CD4-positive, alpha-beta T cell (primary cell): ENCODE measurements at regions of chr19 and their contacts with region 1.

Region 1: GRCh38 chr19:57632987-57633831 is at the start of gene ZNF211:
- DNase-seq: peak; percentile 73 to 95 (median 84)
- ATAC-seq: peak; percentile 99
- H3K4me3 ChIP-seq: peak within 1 kb of the TSS; percentile 87
- H3K4me3 Mint-ChIP-seq: peak within 1 kb of the TSS; percentile 98
- H3K27ac ChIP-seq: peak within 1 kb of the TSS; percentile 69 to 72
- H3K27ac Mint-ChIP-seq: peak within 1 kb of the TSS; percentile 76
- H3K4me1 ChIP-seq: peaks cover 19% of the 10 kb centered on the region
- H3K4me1 Mint-ChIP-seq: peaks cover 31% of the 10 kb centered on the region
- H3K27me3 ChIP-seq: no peaks in the 10 kb centered on the region
- H3K27me3 Mint-ChIP-seq: no peaks in the 10 kb centered on the region
- CTCF ChIP-seq: no peak
- total RNA-seq, gene ZNF211: 29.3 to 30.5 TPM

Region 2: DNA sequence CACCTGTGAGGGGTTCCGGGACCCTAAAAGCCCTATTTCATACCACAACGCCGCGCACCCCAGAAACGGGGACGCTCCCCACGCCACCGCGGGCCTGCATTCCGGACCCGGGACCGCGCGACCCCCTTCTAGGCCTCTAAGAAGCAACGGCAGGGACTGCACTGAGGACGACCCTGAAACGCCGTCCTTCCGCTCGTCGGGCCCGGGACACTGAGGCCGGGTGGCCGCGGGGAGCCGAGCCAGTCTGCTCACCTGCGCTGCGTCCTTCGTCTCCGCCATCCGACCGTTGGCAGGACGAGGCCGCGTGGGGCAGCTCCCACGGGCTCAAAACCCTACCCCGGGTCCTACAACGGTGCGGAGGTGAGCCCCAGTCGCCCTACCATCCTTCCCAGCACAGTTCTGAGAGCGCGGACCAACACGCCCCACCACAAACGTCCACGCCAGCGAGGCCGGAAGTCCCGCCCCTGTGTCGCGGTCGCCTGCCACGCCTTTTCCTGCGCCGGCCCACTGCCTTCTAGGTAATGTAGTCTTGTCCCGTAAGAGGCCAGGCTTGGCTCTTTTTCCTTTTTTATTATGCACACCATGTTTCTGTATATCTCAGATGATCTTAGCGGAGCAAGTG is 73.7 kb before region 1 on chr19 and contains the start of gene ZNF550:
- CTCF ChIA-PET with region 1: no interaction called
- POLR2A ChIA-PET with region 1: no interaction called
- intact Hi-C with region 1: loop called in 1 of 2 experiments (anchors 5 kb)
- DNase-seq: peak; percentile 77 to 93 (median 86)
- ATAC-seq: peak; percentile 98
- H3K4me3 ChIP-seq: peak within 1 kb of the TSS; percentile 94
- H3K4me3 Mint-ChIP-seq: peak within 1 kb of the TSS; percentile 95
- H3K27ac ChIP-seq: peak within 1 kb of the TSS; percentile 44 to 45
- H3K27ac Mint-ChIP-seq: peak within 1 kb of the TSS; percentile 64
- H3K4me1 ChIP-seq: peaks cover 25% of the 10 kb centered on the region
- H3K4me1 Mint-ChIP-seq: peaks cover 34% of the 10 kb centered on the region
- H3K27me3 ChIP-seq: peaks cover 0 to 5% of the 10 kb centered on the region in 2 experiments
- H3K27me3 Mint-ChIP-seq: peaks cover 9% of the 10 kb centered on the region
- CTCF ChIP-seq: no peak
- total RNA-seq, gene ZNF550: 15.7 to 20.0 TPM

Region 3: GRCh38 chr19:57613941-57614743 is 19.1 kb before region 1 on chr19 and contains the start of gene ZNF134:
- CTCF ChIA-PET with region 1: no interaction called
- POLR2A ChIA-PET with region 1: interaction called, 13 read pairs
- intact Hi-C with region 1: loop called (anchors 1 kb)
- DNase-seq: peak; percentile 82 to 96 (median 88)
- ATAC-seq: peak; percentile 99
- H3K4me3 ChIP-seq: peak within 1 kb of the TSS; percentile 94
- H3K4me3 Mint-ChIP-seq: peak within 1 kb of the TSS; percentile 95
- H3K27ac ChIP-seq: peak within 1 kb of the TSS; percentile 26 to 50
- H3K27ac Mint-ChIP-seq: peak within 1 kb of the TSS; percentile 82
- H3K4me1 ChIP-seq: peaks cover 26% of the 10 kb centered on the region
- H3K4me1 Mint-ChIP-seq: peaks cover 36% of the 10 kb centered on the region
- H3K27me3 ChIP-seq: no peaks in the 10 kb centered on the region
- H3K27me3 Mint-ChIP-seq: no peaks in the 10 kb centered on the region
- CTCF ChIP-seq: peak; percentile 25
- total RNA-seq, gene ZNF134: 24.6 to 25.7 TPM

Region 4: GRCh38 chr19:57682226-57682766 is 49.1 kb after region 1 on chr19:
- CTCF ChIA-PET with region 1: interaction called, 8 read pairs
- POLR2A ChIA-PET with region 1: interaction called, 4 read pairs
- intact Hi-C with region 1: loop called in 1 of 2 experiments (anchors 5 kb)
- DNase-seq: no peak
- ATAC-seq: no peak
- H3K4me3 ChIP-seq: peak overlapping the region; percentile 81
- H3K4me3 Mint-ChIP-seq: peak overlapping the region; percentile 98
- H3K27ac ChIP-seq: peak overlapping the region; percentile 29 to 55
- H3K27ac Mint-ChIP-seq: peak overlapping the region; percentile 93
- H3K4me1 ChIP-seq: peaks cover 26% of the 10 kb centered on the region
- H3K4me1 Mint-ChIP-seq: peaks cover 43% of the 10 kb centered on the region
- H3K27me3 ChIP-seq: peaks cover 4 to 8% of the 10 kb centered on the region in 2 experiments
- H3K27me3 Mint-ChIP-seq: peaks cover 14% of the 10 kb centered on the region
- CTCF ChIP-seq: no peak

Region 5: GRCh38 chr19:57708641-57709361 is 75.6 kb after region 1 on chr19 and contains the start of gene ZNF154:
- CTCF ChIA-PET with region 1: no interaction called
- POLR2A ChIA-PET with region 1: interaction called, 10 read pairs
- intact Hi-C with region 1: no loop called
- DNase-seq: peak in 12 of 14 experiments; percentile 10 to 80 (median 34)
- ATAC-seq: peak; percentile 90
- H3K4me3 ChIP-seq: peak within 1 kb of the TSS; percentile 55
- H3K4me3 Mint-ChIP-seq: peak within 1 kb of the TSS; percentile 96
- H3K27ac ChIP-seq: peak within 1 kb of the TSS; percentile 47 to 52
- H3K27ac Mint-ChIP-seq: peak within 1 kb of the TSS; percentile 99
- H3K4me1 ChIP-seq: peaks cover 10% of the 10 kb centered on the region
- H3K4me1 Mint-ChIP-seq: peaks cover 44% of the 10 kb centered on the region
- H3K27me3 ChIP-seq: no peaks in the 10 kb centered on the region
- H3K27me3 Mint-ChIP-seq: no peaks in the 10 kb centered on the region
- CTCF ChIP-seq: no peak
- total RNA-seq, gene ZNF154: 16.9 to 18.0 TPM

Region 6: GRCh38 chr19:57914531-57914930 is 281.3 kb after region 1 on chr19:
- CTCF ChIA-PET with region 1: no interaction called
- POLR2A ChIA-PET with region 1: no interaction called
- intact Hi-C with region 1: loop called in 1 of 2 experiments (anchors 1 kb)
- DNase-seq: no peak
- ATAC-seq: no peak
- H3K4me3 ChIP-seq: no peak overlapping the region
- H3K4me3 Mint-ChIP-seq: peak overlapping the region; percentile 93
- H3K27ac ChIP-seq: no peak overlapping the region
- H3K27ac Mint-ChIP-seq: peak overlapping the region; percentile 92
- H3K4me1 ChIP-seq: peaks cover 14% of the 10 kb centered on the region
- H3K4me1 Mint-ChIP-seq: peaks cover 39% of the 10 kb centered on the region
- H3K27me3 ChIP-seq: no peaks in the 10 kb centered on the region
- H3K27me3 Mint-ChIP-seq: no peaks in the 10 kb centered on the region
- CTCF ChIP-seq: no peak